BJ (cell line): ENCODE measurements at regions of chr16 and their contacts with region 1.

Region 1: GRCh38 chr16:82263521-82264143 is 93.6 kb upstream of the MPHOSPH6 start:
- DNase-seq: no peak
- H3K4me3 ChIP-seq: no peak overlapping the region
- H3K27me3 ChIP-seq: 0 out of 2 replicates have a peak, but pooled peaks cover 2% of the 10 kb centered on the region
- CTCF ChIP-seq: peak; percentile 89

Region 2: DNA sequence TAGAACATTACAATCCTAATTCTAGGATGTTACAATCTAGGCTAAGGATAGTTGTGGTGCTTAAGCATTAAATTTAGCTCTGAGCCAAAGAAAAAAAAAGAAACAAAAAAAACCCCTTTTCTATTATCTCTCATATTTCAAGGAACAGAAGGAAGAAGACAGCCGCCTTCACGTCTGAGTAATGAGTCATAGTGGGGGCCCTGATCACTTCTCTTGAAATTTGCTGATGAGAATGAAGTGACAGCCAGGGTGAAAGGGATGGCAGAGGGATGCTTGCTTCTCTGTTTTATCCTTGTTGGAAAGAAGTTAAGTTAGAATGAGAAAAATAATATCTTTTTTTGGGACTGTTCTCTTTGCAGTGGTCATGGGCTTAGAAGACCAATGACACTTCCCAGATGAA is 11.1 kb before region 1 on chr16:
- CTCF ChIA-PET with region 1: interaction called, 15 read pairs
- POLR2A ChIA-PET with region 1: no interaction called
- DNase-seq: no peak
- H3K4me3 ChIP-seq: no peak overlapping the region
- H3K27me3 ChIP-seq: no peaks in the 10 kb centered on the region
- CTCF ChIP-seq: no peak

Region 3: DNA sequence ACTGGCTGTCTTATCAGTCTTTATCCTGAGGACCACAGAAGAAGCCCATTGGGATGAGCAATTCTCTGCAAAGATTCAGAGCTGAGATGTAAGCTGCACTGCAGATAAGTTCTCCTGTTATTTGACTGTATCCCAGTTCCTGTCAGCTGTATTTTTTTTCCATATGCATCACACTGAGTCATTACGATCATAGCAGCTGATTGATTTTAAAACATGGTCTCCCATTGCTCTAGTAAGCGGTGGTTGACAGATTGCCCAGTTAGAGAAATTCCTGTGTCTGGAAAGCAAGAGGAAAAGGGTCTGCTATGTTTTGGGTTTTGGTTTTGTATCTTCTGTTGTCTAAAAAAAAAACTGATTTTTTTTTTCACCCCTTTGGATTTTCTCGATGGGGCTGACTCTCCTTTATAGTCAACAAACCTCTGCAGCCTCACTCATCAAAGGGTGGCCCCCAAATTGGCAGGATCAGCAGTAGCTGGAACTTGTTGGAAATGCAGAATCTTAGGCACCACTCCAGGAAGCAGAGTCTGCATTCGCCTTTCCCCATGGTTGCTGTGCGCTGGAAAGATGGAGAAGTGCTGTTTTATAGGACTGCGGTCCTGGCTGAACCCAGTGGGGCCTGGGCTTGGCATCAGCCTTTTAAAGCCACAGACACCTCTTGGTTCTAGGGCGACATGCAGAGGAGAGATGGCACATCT is 126.5 kb after region 1 on chr16:
- CTCF ChIA-PET with region 1: no interaction called
- POLR2A ChIA-PET with region 1: no interaction called
- DNase-seq: no peak
- H3K4me3 ChIP-seq: no peak overlapping the region
- H3K27me3 ChIP-seq: no peaks in the 10 kb centered on the region
- CTCF ChIP-seq: no peak

Region 4: DNA sequence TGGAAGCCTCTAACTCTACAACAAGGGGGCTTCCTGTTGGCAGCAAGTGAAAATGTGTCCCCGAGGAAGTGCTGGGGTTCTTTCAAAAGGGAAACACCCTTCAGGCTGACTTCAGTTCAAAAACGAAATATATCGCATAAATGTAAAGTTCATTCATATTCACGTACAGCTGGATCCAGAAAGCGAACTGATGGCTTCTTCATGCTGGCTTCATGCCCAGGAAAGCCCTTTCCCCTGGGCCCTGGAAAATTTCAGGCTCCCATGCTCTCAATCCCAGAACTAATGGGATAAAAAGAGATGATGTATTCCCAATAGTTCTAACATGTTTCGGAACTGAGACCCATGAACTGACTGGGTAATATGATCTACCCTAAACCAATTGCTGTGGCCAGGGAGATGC is 258.4 kb after region 1 on chr16:
- CTCF ChIA-PET with region 1: no interaction called
- POLR2A ChIA-PET with region 1: interaction called, 22 read pairs
- DNase-seq: no peak
- H3K4me3 ChIP-seq: no peak overlapping the region
- H3K27me3 ChIP-seq: no peaks in the 10 kb centered on the region
- CTCF ChIP-seq: no peak

Region 5: GRCh38 chr16:82639666-82640336 is 376.2 kb after region 1 on chr16:
- CTCF ChIA-PET with region 1: interaction called, 29 read pairs
- POLR2A ChIA-PET with region 1: no interaction called
- DNase-seq: no peak
- H3K4me3 ChIP-seq: no peak overlapping the region
- H3K27me3 ChIP-seq: no peaks in the 10 kb centered on the region
- CTCF ChIP-seq: peak; percentile 88

Region 6: GRCh38 chr16:83215406-83216001 is 951.9 kb after region 1 on chr16:
- CTCF ChIA-PET with region 1: interaction called, 14 read pairs
- POLR2A ChIA-PET with region 1: no interaction called
- DNase-seq: no peak
- H3K4me3 ChIP-seq: no peak overlapping the region
- H3K27me3 ChIP-seq: no peaks in the 10 kb centered on the region
- CTCF ChIP-seq: peak; percentile 87

Region 7: GRCh38 chr16:83443973-83444372 is 1180.3 kb after region 1 on chr16:
- CTCF ChIA-PET with region 1: interaction called, 21 read pairs
- POLR2A ChIA-PET with region 1: no interaction called
- DNase-seq: no peak
- H3K4me3 ChIP-seq: no peak overlapping the region
- H3K27me3 ChIP-seq: no peaks in the 10 kb centered on the region
- CTCF ChIP-seq: no peak